Breast epithelium (tissue), 4 donors: ENCODE measurements at regions of chr6 and their contacts with region 1.

Region 1: DNA sequence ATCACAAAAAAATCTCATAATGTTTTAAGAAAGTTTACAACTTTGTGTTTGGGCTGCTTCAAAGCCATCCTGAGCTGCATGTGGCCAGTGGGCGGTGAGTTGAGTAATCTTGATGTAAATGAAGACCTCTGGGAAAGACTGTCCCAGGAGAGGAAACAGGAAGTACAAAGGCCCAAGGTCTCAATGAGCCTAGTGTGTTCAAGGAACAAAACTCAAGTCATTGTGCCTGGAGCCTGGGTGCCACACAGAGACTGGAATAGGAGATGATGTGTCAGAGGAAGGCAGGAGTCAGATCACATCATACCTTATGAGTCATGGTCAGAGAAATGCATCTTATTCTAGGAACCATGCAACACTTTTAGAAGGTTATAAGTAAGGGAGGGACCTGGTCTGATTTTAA is 51.5 kb downstream of the COL19A1 start:
- DNase-seq: no peak
- H3K4me3 ChIP-seq: no peak overlapping the region
- H3K27ac ChIP-seq: no peak overlapping the region
- H3K4me1 ChIP-seq: no peaks in the 10 kb centered on the region
- H3K27me3 ChIP-seq: no peaks in the 10 kb centered on the region
- CTCF ChIP-seq: no peak
- POLR2A ChIP-seq: no peak

Region 2: DNA sequence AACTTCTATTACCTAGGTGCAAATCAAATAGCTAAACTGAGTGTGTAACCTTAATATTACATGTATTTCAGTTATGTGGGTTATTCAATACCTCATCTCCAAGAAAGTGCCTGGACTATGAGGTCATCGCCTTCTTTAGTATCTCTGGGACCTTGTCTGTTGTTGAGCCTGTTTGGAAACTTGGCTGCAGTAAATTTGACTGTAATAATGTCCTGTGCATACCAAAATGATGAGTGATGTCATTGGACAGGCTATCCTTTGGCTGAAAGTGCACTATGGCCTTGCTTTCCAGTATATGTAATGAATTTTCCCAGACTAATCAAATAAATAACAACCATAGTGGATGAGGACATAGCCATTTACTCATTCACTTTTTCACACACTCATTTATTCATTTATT is 827.7 kb before region 1 on chr6:
- intact Hi-C with region 1: loop called (anchors 5 kb)
- DNase-seq: no peak
- H3K4me3 ChIP-seq: no peak overlapping the region
- H3K27ac ChIP-seq: no peak overlapping the region
- H3K4me1 ChIP-seq: no peaks in the 10 kb centered on the region
- H3K27me3 ChIP-seq: no peaks in the 10 kb centered on the region
- CTCF ChIP-seq: no peak
- POLR2A ChIP-seq: no peak